ENCODE measurements at regions of chr19 and their contacts with region 1.

Region 1: GRCh38 chr19:6551607-6552450 is 21.0 kb downstream of the TNFSF9 start:
- DNase-seq: peak; percentile 73
- H3K4me3 Mint-ChIP-seq: no peak overlapping the region
- H3K27ac Mint-ChIP-seq: no peak overlapping the region
- H3K4me1 Mint-ChIP-seq: peaks cover 17% of the 10 kb centered on the region
- H3K27me3 Mint-ChIP-seq: peaks cover 11% of the 10 kb centered on the region

Region 2: DNA sequence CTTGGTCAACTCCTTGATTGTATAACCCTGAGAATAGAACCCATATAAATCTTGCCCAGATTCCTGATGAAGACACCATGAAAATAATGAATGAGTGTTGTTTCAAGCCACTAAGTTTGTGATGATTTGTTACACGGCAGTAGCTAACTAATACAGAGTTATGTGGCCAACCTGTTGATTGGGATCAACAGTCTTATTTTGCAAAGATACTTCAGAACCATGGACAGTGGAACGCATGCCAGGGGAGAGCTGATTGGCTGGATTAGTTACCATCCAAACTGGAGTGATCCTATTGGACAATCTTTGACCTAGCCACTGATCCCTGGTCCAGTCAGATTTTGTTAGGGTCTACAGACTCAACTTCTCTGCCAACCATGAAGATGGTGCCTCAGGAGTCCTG is 12.6 kb after region 1 on chr19:
- CTCF ChIA-PET with region 1: interaction called, 12 read pairs
- DNase-seq: peak; percentile 47
- H3K4me3 Mint-ChIP-seq: no peak overlapping the region
- H3K27ac Mint-ChIP-seq: no peak overlapping the region
- H3K4me1 Mint-ChIP-seq: no peaks in the 10 kb centered on the region
- H3K27me3 Mint-ChIP-seq: peaks cover 22% of the 10 kb centered on the region

Measured in activated naive CD4-positive, alpha-beta T cell treated with anti-CD3 and anti-CD28 coated beads, Interleukin-2, amount 10 ng/mL, durations not matched to agents 7 days and 5 days (primary cell).